CD8-positive, alpha-beta memory T cell (primary cell): ENCODE measurements at regions of chr3 and their contacts with region 1.

Region 1: GRCh38 chr3:36944012-36944640 is 728 bp downstream of the TRANK1 start:
- DNase-seq: peak; percentile 7 to 56 (median 44)
- H3K4me3 ChIP-seq: peak overlapping the region; percentile 64
- H3K4me3 Mint-ChIP-seq: peak overlapping the region; percentile 85 to 91 (median 86)
- H3K27ac ChIP-seq: peak overlapping the region; percentile 65
- H3K27ac Mint-ChIP-seq: peak overlapping the region; percentile 22 to 89 (median 68)
- H3K4me1 ChIP-seq: peaks cover 14% of the 10 kb centered on the region
- H3K4me1 Mint-ChIP-seq: peaks cover 14 to 43% (median 26%) of the 10 kb centered on the region in 3 donors
- H3K27me3 ChIP-seq: no peaks in the 10 kb centered on the region
- H3K27me3 Mint-ChIP-seq: peaks cover 0 to 1% of the 10 kb centered on the region in 2 donors

Region 2: GRCh38 chr3:36911990-36912804 is 31.9 kb before region 1 on chr3:
- CTCF ChIA-PET with region 1: interaction called, 3 read pairs
- POLR2A ChIA-PET with region 1: interaction called, 12 read pairs
- DNase-seq: peak in 4 of 5 donors; percentile 4 to 57 (median 51)
- H3K4me3 ChIP-seq: peak overlapping the region; percentile 46
- H3K4me3 Mint-ChIP-seq: peak overlapping the region; percentile 75 to 85 (median 78)
- H3K27ac ChIP-seq: peak overlapping the region; percentile 60
- H3K27ac Mint-ChIP-seq: peak overlapping the region; percentile 77 to 97 (median 84)
- H3K4me1 ChIP-seq: peaks cover 27% of the 10 kb centered on the region
- H3K4me1 Mint-ChIP-seq: peaks cover 34 to 57% (median 46%) of the 10 kb centered on the region in 3 donors
- H3K27me3 ChIP-seq: no peaks in the 10 kb centered on the region
- H3K27me3 Mint-ChIP-seq: peaks cover 0 to 2% of the 10 kb centered on the region in 2 donors

Region 3: DNA sequence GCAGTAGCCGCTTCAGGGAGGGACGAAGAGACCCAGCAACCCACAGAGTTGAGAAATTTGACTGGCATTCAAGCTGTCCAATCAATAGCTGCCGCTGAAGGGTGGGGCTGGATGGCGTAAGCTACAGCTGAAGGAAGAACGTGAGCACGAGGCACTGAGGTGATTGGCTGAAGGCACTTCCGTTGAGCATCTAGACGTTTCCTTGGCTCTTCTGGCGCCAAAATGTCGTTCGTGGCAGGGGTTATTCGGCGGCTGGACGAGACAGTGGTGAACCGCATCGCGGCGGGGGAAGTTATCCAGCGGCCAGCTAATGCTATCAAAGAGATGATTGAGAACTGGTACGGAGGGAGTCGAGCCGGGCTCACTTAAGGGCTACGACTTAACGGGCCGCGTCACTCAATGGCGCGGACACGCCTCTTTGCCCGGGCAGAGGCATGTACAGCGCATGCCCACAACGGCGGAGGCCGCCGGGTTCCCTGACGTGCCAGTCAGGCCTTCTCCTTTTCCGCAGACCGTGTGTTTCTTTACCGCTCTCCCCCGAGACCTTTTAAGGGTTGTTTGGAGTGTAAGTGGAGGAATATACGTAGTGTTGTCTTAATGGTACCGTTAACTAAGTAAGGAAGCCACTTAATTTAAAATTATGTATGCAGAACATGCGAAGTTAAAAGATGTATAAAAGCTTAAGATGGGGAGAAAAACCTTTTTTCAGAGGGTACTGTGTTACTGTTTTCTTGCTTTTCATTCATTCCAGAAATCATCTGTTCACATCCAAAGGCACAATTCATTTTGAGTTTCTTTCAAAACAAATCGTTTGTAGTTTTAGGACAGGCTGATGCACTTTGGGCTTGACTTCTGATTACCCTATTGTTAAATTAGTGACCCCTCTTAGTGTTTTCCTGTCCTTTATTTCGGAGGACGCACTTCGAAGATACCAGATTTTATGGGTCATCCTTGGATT is 49.5 kb after region 1 on chr3 and contains the start of gene MLH1:
- CTCF ChIA-PET with region 1: interaction called, 3 read pairs
- POLR2A ChIA-PET with region 1: interaction called, 25 read pairs
- DNase-seq: peak; percentile 91 to 99 (median 94)
- H3K4me3 ChIP-seq: peak within 1 kb of the TSS; percentile 93
- H3K4me3 Mint-ChIP-seq: no peak within 1 kb of the TSS
- H3K27ac ChIP-seq: peak within 1 kb of the TSS; percentile 100
- H3K27ac Mint-ChIP-seq: no peak within 1 kb of the TSS
- H3K4me1 ChIP-seq: peaks cover 48% of the 10 kb centered on the region
- H3K4me1 Mint-ChIP-seq: peaks cover 19 to 40% (median 22%) of the 10 kb centered on the region in 3 donors
- H3K27me3 ChIP-seq: no peaks in the 10 kb centered on the region
- H3K27me3 Mint-ChIP-seq: no peaks in the 10 kb centered on the region
- total RNA-seq, gene MLH1: 66.4 to 73.2 TPM